ENCODE measurements at regions of chr17 and their contacts with region 1.

Region 1: DNA sequence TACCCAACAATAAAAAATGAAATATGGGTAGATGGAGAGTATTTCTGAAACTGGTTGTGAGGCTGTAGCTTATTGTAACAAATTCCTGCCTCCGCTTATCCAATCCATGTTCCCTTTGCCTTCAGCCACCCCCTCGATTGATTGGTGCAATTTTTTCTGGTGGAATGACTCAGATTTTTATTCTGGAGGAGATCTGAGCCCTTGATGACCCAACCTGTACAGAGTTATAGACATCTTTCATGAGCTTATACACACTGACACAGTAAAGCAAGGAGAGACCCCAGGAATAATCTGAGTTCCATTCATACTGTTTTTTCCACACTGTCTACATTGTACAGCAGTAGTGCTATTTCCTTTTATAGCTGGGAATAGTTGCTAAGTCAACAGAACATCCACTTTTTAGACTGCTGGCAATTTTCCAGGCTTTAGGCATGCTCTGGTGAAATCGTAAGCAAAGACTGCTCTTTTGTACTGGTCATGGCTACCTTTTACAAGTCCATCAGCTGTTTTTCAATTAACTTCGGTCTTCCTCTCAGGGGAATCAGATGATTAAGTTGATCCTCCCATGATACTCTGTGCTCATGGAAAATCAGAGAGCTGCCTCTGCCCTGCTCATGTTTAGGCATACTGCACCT is 30.1 kb downstream of the CCL4 start:
- DNase-seq: no peak
- ATAC-seq: no peak
- H3K4me3 ChIP-seq: no peak overlapping the region
- H3K4me3 Mint-ChIP-seq: no peak overlapping the region
- H3K27ac ChIP-seq: no peak overlapping the region
- H3K27ac Mint-ChIP-seq: peak overlapping the region; percentile 8
- H3K4me1 ChIP-seq: peaks cover 82 to 86% of the 10 kb centered on the region in 2 donors
- H3K4me1 Mint-ChIP-seq: peaks cover 76% of the 10 kb centered on the region
- H3K27me3 ChIP-seq: no peaks in the 10 kb centered on the region
- H3K27me3 Mint-ChIP-seq: no peaks in the 10 kb centered on the region
- CTCF ChIP-seq: no peak

Region 2: GRCh38 chr17:35981908-35982330 is 151.8 kb before region 1 on chr17:
- CTCF ChIA-PET with region 1: interaction called, 8 read pairs
- POLR2A ChIA-PET with region 1: interaction called, 4 read pairs
- intact Hi-C with region 1: loop called (anchors 5 kb)
- DNase-seq: peak; percentile 27
- ATAC-seq: peak; percentile 33
- H3K4me3 ChIP-seq: no peak overlapping the region
- H3K4me3 Mint-ChIP-seq: no peak overlapping the region
- H3K27ac ChIP-seq: no peak overlapping the region
- H3K27ac Mint-ChIP-seq: no peak overlapping the region
- H3K4me1 ChIP-seq: peaks cover 0 to 3% of the 10 kb centered on the region in 2 donors
- H3K4me1 Mint-ChIP-seq: peaks cover 8% of the 10 kb centered on the region
- H3K27me3 ChIP-seq: peaks cover 0 to 3% (median 1%) of the 10 kb centered on the region in 4 experiments
- H3K27me3 Mint-ChIP-seq: peaks cover 13% of the 10 kb centered on the region
- CTCF ChIP-seq: no peak

Region 3: DNA sequence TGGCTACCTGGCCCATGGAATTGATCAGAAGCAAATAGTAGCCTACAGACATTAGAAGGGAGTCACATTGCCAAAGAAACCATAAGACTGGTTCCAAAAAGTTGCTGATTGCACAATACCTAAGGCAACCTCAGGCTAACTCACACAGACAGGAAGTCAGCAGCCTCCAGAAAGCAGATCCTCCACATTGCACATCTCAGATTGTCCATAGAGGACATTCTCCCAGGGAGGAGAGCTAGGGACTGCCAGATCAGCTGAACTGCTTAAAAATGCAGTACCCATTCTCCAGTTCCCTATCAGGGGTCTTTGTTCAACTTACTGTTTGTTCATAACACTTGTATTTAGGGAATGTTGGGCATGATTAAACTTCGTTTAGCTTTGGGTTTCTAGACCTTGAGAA is 48.0 kb before region 1 on chr17:
- CTCF ChIA-PET with region 1: no interaction called
- POLR2A ChIA-PET with region 1: no interaction called
- intact Hi-C with region 1: no loop called
- DNase-seq: no peak
- ATAC-seq: no peak
- H3K4me3 ChIP-seq: no peak overlapping the region
- H3K4me3 Mint-ChIP-seq: no peak overlapping the region
- H3K27ac ChIP-seq: no peak overlapping the region
- H3K27ac Mint-ChIP-seq: no peak overlapping the region
- H3K4me1 ChIP-seq: peaks cover 40 to 44% of the 10 kb centered on the region in 2 donors
- H3K4me1 Mint-ChIP-seq: peaks cover 62% of the 10 kb centered on the region
- H3K27me3 ChIP-seq: no peaks in the 10 kb centered on the region
- H3K27me3 Mint-ChIP-seq: no peaks in the 10 kb centered on the region
- CTCF ChIP-seq: no peak

Measured in B cell (primary cell).